GM10248 (cell line): ENCODE measurements at regions of chr4 and their contacts with region 1.

Region 1: DNA sequence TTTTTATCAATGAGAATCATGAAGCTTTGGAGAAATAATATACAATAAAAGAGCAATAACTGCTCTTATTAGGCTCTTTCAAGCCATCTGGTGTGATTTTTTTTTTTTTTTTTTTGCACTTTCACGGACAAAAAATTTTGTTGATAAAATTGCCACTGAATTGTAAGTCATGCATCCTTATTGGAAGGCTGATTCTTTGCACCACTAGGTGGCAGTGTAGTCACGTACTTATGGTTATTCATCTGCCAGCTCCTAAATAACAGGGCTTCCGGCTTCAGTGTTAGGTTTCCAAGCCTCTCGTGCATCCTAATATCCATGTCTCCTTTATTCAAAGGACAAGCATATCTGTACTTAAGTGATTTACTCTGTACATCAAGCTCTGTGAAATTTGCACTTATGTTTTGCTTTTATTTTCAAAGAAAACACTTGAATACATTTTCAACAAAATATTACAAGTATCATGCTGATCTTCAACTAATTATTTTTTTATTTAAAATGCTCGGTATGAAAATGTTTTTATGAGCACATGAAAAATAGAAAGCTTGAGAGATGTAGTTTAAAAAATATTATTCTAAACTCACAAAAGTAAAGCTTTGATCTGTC is 1578.3 kb upstream of the TENM3 start:
- DNase-seq: peak; percentile 42
- CTCF ChIP-seq: peak; percentile 80

Region 2: GRCh38 chr4:179867300-179867878 is 797.5 kb before region 1 on chr4:
- CTCF ChIA-PET with region 1: interaction called, 21 read pairs
- POLR2A ChIA-PET with region 1: no interaction called
- DNase-seq: peak; percentile 56
- CTCF ChIP-seq: peak; percentile 81

Region 3: GRCh38 chr4:180493299-180493698 is 171.6 kb before region 1 on chr4:
- CTCF ChIA-PET with region 1: no interaction called
- POLR2A ChIA-PET with region 1: no interaction called
- DNase-seq: no peak
- CTCF ChIP-seq: no peak

Region 4: DNA sequence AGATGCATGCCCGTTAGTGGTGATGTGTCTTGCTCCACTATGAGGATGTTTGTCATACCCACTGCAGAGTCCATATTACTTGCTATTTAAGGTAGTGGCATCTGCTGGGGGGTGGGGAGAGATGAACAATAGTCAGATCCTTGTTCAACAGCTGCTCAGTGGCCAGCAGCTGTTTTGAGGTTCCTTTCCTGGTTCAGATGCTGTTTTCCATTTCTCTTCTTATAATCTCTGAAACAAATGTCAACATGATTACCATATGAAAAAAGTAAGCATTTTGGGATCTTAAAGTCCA is 10.4 kb after region 1 on chr4:
- CTCF ChIA-PET with region 1: interaction called, 41 read pairs
- POLR2A ChIA-PET with region 1: no interaction called
- DNase-seq: no peak
- CTCF ChIP-seq: no peak

Region 5: GRCh38 chr4:180680305-180680704 is 15.4 kb after region 1 on chr4:
- CTCF ChIA-PET with region 1: interaction called, 41 read pairs
- POLR2A ChIA-PET with region 1: no interaction called
- DNase-seq: no peak
- CTCF ChIP-seq: no peak